ENCODE measurements at regions of chr19 and their contacts with region 1.

Region 1: GRCh38 chr19:10408511-10409283 is 5.4 kb upstream of the CDC37 start:
- DNase-seq: peak; percentile 81
- H3K4me3 ChIP-seq: peak overlapping the region; percentile 54
- H3K27ac ChIP-seq: peak overlapping the region; percentile 100
- H3K4me1 ChIP-seq: peaks cover 94% of the 10 kb centered on the region
- CTCF ChIP-seq: no peak

Region 2: GRCh38 chr19:10502524-10503001 is 93.9 kb after region 1 on chr19:
- CTCF ChIA-PET with region 1: no interaction called
- POLR2A ChIA-PET with region 1: no interaction called
- intact Hi-C with region 1: loop called (anchors 5 kb)
- DNase-seq: peak; percentile 96
- H3K4me3 ChIP-seq: peak overlapping the region; percentile 86
- H3K27ac ChIP-seq: peak overlapping the region; percentile 75
- H3K4me1 ChIP-seq: peaks cover 17% of the 10 kb centered on the region
- CTCF ChIP-seq: 0 out of 2 replicates have a peak, but pooled peaks have one; percentile 5

Measured in OCI-LY7 (cell line).